ENCODE measurements at regions of chr1 and their contacts with region 1.

Region 1: GRCh38 chr1:161718559-161719324 is 2.6 kb upstream of the FCRLB start:
- DNase-seq: no peak
- H3K4me3 ChIP-seq: no peak overlapping the region
- H3K27ac ChIP-seq: no peak overlapping the region
- H3K4me1 ChIP-seq: no peaks in the 10 kb centered on the region
- H3K27me3 ChIP-seq: no peaks in the 10 kb centered on the region
- CTCF ChIP-seq: no peak
- POLR2A ChIP-seq: no peak

Region 2: GRCh38 chr1:160935527-160936258 is 783.0 kb before region 1 on chr1:
- intact Hi-C with region 1: no loop called
- DNase-seq: no peak
- H3K4me3 ChIP-seq: no peak overlapping the region
- H3K27ac ChIP-seq: no peak overlapping the region
- H3K4me1 ChIP-seq: no peaks in the 10 kb centered on the region
- H3K27me3 ChIP-seq: no peaks in the 10 kb centered on the region
- CTCF ChIP-seq: no peak
- POLR2A ChIP-seq: no peak

Region 3: GRCh38 chr1:161749509-161750407 is 31.0 kb after region 1 on chr1 and contains the start of gene DUSP12:
- intact Hi-C with region 1: loop called (anchors 1 kb)
- DNase-seq: peak in 1 of 2 donors; percentile 92
- H3K4me3 ChIP-seq: peak within 1 kb of the TSS; percentile 90 to 98
- H3K27ac ChIP-seq: peak within 1 kb of the TSS; percentile 87
- H3K4me1 ChIP-seq: peaks cover 12% of the 10 kb centered on the region
- H3K27me3 ChIP-seq: no peaks in the 10 kb centered on the region
- CTCF ChIP-seq: no peak
- POLR2A ChIP-seq: no peak
- total RNA-seq, gene DUSP12: 34.1 TPM

Region 4: GRCh38 chr1:161915051-161915503 is 196.3 kb after region 1 on chr1:
- intact Hi-C with region 1: no loop called
- DNase-seq: no peak
- H3K4me3 ChIP-seq: no peak overlapping the region
- H3K27ac ChIP-seq: no peak overlapping the region
- H3K4me1 ChIP-seq: peaks cover 7% of the 10 kb centered on the region
- H3K27me3 ChIP-seq: no peaks in the 10 kb centered on the region
- CTCF ChIP-seq: no peak
- POLR2A ChIP-seq: no peak

Region 5: DNA sequence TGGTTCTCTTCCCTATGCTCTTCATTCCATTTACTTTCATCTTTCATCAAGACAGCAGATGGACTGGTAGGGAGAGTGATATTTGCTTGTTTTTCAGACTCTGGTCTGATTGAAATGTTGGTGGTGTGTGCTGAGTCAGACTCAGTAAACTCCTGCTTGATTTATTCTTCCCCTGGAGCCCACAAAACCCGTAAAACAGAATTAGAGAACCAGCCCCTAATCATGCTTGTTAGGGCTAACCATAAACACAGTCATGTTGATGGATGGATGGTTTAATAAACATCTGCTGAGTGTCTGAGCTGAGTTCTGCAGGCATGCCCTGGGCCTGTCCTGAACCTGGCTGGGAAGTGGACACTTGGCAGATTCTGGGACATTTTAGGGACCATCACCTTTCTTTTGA is 375.5 kb after region 1 on chr1:
- intact Hi-C with region 1: no loop called
- DNase-seq: no peak
- H3K4me3 ChIP-seq: no peak overlapping the region
- H3K27ac ChIP-seq: no peak overlapping the region
- H3K4me1 ChIP-seq: no peaks in the 10 kb centered on the region
- H3K27me3 ChIP-seq: no peaks in the 10 kb centered on the region
- CTCF ChIP-seq: no peak
- POLR2A ChIP-seq: no peak

Region 6: GRCh38 chr1:162256287-162256686 is 537.5 kb after region 1 on chr1:
- intact Hi-C with region 1: no loop called
- DNase-seq: no peak
- H3K4me3 ChIP-seq: no peak overlapping the region
- H3K27ac ChIP-seq: no peak overlapping the region
- H3K4me1 ChIP-seq: no peaks in the 10 kb centered on the region
- H3K27me3 ChIP-seq: no peaks in the 10 kb centered on the region
- CTCF ChIP-seq: no peak
- POLR2A ChIP-seq: no peak